Caco-2 (cell line): ENCODE measurements at regions of chr18 and their contacts with region 1.

Region 1: DNA sequence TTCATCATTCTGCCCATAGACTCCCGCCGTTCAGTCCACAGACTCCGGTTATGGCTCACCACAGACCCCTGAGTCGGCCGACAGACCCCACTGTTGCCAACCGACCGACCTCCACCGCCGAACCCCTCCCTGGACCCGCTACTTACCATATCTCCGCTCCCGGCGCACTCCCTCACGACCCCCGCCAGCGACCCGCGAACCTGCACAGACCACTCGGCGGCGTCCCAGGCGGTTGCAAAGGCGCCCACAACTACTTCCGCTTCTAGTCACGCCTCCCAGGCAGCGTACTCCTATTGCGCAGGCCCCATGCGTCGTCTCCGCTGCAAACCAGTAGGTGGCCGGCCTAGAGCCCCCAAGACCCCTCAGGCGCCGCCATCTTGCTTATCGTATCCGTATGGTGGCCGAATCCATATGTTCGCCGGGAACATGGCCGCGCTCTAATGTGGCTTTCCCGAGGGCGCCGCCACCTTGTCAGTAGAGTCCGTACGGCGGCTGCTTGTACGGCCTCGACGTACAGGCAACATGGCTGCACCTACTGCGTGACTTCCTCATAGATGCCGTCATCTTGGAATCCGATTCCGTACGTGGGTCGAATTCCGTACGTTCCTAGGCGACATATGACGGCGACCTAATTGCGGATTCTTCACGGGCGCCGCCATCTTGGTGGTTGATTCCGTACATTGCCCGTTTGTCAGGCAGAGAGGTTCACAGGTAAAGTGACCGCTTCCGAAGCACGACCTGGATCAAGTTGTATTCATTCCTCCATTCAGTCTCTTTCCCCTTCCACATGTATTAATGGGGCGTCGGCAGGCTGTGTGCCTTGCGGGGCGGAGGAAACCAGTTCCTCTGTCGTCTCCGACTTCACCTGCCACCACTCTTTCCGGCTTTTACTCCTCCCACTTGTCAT is at the start of gene CXXC1:
- DNase-seq: peak; percentile 92 to 95
- H3K4me3 ChIP-seq: peak within 1 kb of the TSS; percentile 53
- H3K4me3 Mint-ChIP-seq: peak within 1 kb of the TSS; percentile 87
- H3K27ac Mint-ChIP-seq: peak within 1 kb of the TSS; percentile 84
- H3K4me1 ChIP-seq: no peaks in the 10 kb centered on the region
- H3K4me1 Mint-ChIP-seq: peaks cover 7% of the 10 kb centered on the region
- H3K27me3 ChIP-seq: no peaks in the 10 kb centered on the region
- H3K27me3 Mint-ChIP-seq: no peaks in the 10 kb centered on the region
- CTCF ChIP-seq: peak; percentile 26 to 38
- total RNA-seq, gene CXXC1: 37.7 and 41.5 TPM in 2 replicates

Region 2: DNA sequence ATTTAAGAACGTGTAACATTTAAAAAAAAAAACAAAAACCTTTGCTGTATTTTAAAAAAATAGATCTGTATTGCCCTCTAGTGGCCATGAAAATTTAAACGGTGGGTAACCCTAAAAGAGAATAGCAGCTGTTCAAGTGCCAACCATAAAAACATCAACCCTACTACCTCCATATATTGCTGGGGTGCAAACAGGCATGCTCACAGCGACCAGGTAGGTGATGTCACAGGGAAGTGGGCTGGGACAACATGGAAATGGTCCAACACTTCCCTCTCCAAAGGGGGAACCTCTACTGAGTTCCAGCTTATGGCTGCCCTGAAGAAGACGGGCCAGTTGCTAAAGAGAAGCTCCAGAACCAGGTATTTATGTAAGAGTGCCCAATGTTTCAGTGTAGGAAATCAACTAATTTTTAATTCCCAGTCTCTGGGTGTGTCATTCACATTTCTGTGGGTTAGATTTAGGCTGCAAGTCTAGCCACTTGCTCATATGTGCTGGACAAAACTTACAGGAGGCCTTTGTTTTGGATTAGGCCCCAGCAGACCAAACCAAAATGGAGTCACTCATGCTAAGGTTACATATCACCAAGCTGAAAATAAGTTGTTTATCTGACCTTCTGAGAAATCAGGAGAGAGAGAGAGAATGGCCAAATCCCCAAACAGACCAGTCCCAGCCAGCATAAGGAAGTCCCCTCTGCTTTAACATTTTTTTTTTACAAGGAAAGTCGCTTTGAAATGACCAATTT is 141.7 kb after region 1 on chr18:
- CTCF ChIA-PET with region 1: no interaction called
- POLR2A ChIA-PET with region 1: no interaction called
- intact Hi-C with region 1: loop called (anchors 5 kb)
- DNase-seq: peak in 1 of 2 experiments; percentile 48
- H3K4me3 ChIP-seq: no peak overlapping the region
- H3K4me3 Mint-ChIP-seq: no peak overlapping the region
- H3K27ac Mint-ChIP-seq: no peak overlapping the region
- H3K4me1 ChIP-seq: no peaks in the 10 kb centered on the region
- H3K4me1 Mint-ChIP-seq: no peaks in the 10 kb centered on the region
- H3K27me3 ChIP-seq: no peaks in the 10 kb centered on the region
- H3K27me3 Mint-ChIP-seq: no peaks in the 10 kb centered on the region
- CTCF ChIP-seq: peak in 1 of 2 experiments; percentile 34